CD4-positive, alpha-beta T cell (primary cell): ENCODE measurements at regions of chr4 and their contacts with region 1.

Region 1: DNA sequence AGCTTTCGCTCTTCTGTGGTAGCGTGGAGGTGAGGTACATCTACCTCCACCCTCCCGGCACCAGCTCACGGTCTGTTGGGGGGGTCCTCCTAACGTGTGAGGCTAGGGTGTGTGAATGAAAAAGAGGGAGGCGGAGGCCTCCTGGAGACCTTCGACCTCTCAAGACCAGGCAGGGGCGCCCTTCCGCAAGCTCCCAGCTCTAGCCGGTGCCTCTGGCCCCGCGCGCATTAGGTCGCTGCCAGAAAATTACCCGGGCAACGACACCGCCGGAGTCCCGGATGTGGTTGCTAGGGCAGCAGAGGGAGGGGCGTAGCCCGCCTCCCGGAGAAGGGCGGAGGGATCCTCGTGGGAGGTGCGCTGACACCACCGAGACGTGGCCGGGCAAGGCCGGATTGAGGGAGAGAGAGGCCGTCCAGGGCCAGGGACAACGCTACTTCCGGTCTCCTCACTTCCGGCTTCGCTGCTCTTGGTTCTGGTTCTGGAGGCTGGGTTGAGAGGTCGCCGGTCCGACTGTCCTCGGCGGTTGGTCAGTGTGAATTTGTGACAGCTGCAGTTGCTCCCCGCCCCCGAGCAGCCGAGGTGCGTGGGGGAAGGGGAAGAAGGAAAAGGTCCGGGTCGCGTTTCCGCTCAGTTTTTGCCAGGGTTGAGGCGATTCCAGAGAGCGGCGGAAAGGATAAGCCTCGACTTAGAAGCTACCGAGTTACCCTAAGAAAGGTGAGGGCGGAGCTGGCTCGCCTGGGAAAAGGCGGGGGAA is at the starts of genes ARFIP1 and TIGD4:
- DNase-seq: peak; percentile 84 to 96 (median 92)
- ATAC-seq: peak; percentile 84
- H3K4me3 ChIP-seq: peak within 1 kb of the TSS; percentile 72
- H3K4me3 Mint-ChIP-seq: peak within 1 kb of the TSS; percentile 90
- H3K27ac ChIP-seq: peak within 1 kb of the TSS; percentile 75 to 79
- H3K27ac Mint-ChIP-seq: peak within 1 kb of the TSS; percentile 95
- H3K4me1 ChIP-seq: peaks cover 21% of the 10 kb centered on the region
- H3K4me1 Mint-ChIP-seq: peaks cover 50% of the 10 kb centered on the region
- H3K27me3 ChIP-seq: no peaks in the 10 kb centered on the region
- H3K27me3 Mint-ChIP-seq: peaks cover 11% of the 10 kb centered on the region
- CTCF ChIP-seq: no peak
- total RNA-seq, gene ARFIP1: 2.6 to 3.0 TPM
- total RNA-seq, gene TIGD4: 0.22 TPM in 1 of 2 experiments, not detected in the other

Region 2: GRCh38 chr4:151015459-151016347 is 1764.0 kb before region 1 on chr4:
- CTCF ChIA-PET with region 1: no interaction called
- POLR2A ChIA-PET with region 1: interaction called, 6 read pairs
- intact Hi-C with region 1: loop called in 1 of 2 experiments (anchors 10 kb)
- DNase-seq: peak; percentile 65 to 95 (median 78)
- ATAC-seq: peak; percentile 72
- H3K4me3 ChIP-seq: peak overlapping the region; percentile 83
- H3K4me3 Mint-ChIP-seq: peak overlapping the region; percentile 100
- H3K27ac ChIP-seq: peak overlapping the region; percentile 91 to 97
- H3K27ac Mint-ChIP-seq: peak overlapping the region; percentile 98
- H3K4me1 ChIP-seq: peaks cover 28% of the 10 kb centered on the region
- H3K4me1 Mint-ChIP-seq: peaks cover 40% of the 10 kb centered on the region
- H3K27me3 ChIP-seq: no peaks in the 10 kb centered on the region
- H3K27me3 Mint-ChIP-seq: no peaks in the 10 kb centered on the region
- CTCF ChIP-seq: no peak

Region 3: DNA sequence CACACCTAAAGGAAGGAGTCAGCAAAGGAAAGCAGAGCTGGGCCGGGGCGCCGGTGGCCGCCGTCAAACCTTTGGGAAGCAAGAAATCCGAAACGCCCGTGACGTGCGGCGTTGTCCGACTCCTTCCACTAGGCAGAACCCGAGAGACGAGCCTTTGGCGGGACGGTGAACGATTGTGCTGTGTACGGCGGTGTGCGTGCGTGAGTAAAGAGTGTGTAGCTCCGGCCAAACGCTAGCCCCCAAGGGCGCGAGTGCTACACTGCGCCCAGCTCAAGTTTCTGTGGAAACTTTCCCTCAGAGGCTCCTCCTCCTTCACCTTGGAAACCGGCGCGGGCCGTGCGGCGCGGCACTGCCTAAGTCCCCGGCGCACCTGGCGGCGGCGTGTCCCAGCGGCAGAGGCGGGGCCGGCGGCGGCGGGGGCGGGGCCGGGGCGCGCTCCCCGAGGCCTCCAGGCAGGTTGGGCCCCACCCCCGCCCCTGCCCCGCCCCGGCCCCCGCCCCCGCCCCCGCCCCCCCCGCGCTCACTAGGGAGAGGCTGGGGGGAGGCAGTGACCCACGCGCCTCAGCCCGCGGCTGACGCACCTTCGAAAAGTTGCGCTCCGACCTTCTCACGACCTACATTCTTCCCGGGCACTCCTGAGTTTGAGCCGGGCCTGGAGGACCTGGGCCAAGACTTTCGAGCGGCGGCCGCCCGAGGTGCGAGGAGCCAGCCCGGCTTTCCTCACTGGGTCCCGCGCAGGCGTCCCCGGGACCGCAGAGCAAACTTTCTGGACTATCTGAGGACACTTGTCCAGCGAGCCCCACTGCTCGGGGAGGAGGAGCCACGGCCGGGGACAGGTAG is 1370.8 kb before region 1 on chr4 and contains the start of gene FHIP1A:
- CTCF ChIA-PET with region 1: interaction called, 3 read pairs
- POLR2A ChIA-PET with region 1: no interaction called
- intact Hi-C with region 1: loop called in 1 of 2 experiments (anchors 5 kb)
- DNase-seq: peak; percentile 73 to 93 (median 85)
- ATAC-seq: peak; percentile 93
- H3K4me3 ChIP-seq: peak within 1 kb of the TSS; percentile 68
- H3K4me3 Mint-ChIP-seq: peak within 1 kb of the TSS; percentile 96
- H3K27ac ChIP-seq: no peak within 1 kb of the TSS
- H3K27ac Mint-ChIP-seq: peak within 1 kb of the TSS; percentile 83
- H3K4me1 ChIP-seq: peaks cover 27% of the 10 kb centered on the region
- H3K4me1 Mint-ChIP-seq: peaks cover 27% of the 10 kb centered on the region
- H3K27me3 ChIP-seq: peaks cover 0 to 4% of the 10 kb centered on the region in 2 experiments
- H3K27me3 Mint-ChIP-seq: peaks cover 4% of the 10 kb centered on the region
- CTCF ChIP-seq: no peak
- total RNA-seq, gene FHIP1A: 2.4 to 3.2 TPM

Region 4: GRCh38 chr4:152640058-152640833 is 139.4 kb before region 1 on chr4:
- CTCF ChIA-PET with region 1: no interaction called
- POLR2A ChIA-PET with region 1: no interaction called
- intact Hi-C with region 1: no loop called
- DNase-seq: peak in 3 of 14 experiments; percentile 39 to 47 (median 41)
- ATAC-seq: peak; percentile 56
- H3K4me3 ChIP-seq: no peak overlapping the region
- H3K4me3 Mint-ChIP-seq: no peak overlapping the region
- H3K27ac ChIP-seq: no peak overlapping the region
- H3K27ac Mint-ChIP-seq: no peak overlapping the region
- H3K4me1 ChIP-seq: peaks cover 16% of the 10 kb centered on the region
- H3K4me1 Mint-ChIP-seq: peaks cover 22% of the 10 kb centered on the region
- H3K27me3 ChIP-seq: no peaks in the 10 kb centered on the region
- H3K27me3 Mint-ChIP-seq: no peaks in the 10 kb centered on the region
- CTCF ChIP-seq: peak; percentile 87

Region 5: GRCh38 chr4:152679414-152680281 is 100.0 kb before region 1 on chr4 and contains the start of gene TMEM154:
- CTCF ChIA-PET with region 1: interaction called, 3 read pairs
- POLR2A ChIA-PET with region 1: interaction called, 16 read pairs
- intact Hi-C with region 1: loop called in 1 of 2 experiments (anchors 5 kb)
- DNase-seq: peak; percentile 48 to 90 (median 67)
- ATAC-seq: peak; percentile 98
- H3K4me3 ChIP-seq: peak within 1 kb of the TSS; percentile 88
- H3K4me3 Mint-ChIP-seq: peak within 1 kb of the TSS; percentile 97
- H3K27ac ChIP-seq: peak within 1 kb of the TSS; percentile 66 to 73
- H3K27ac Mint-ChIP-seq: peak within 1 kb of the TSS; percentile 98
- H3K4me1 ChIP-seq: peaks cover 31% of the 10 kb centered on the region
- H3K4me1 Mint-ChIP-seq: peaks cover 52% of the 10 kb centered on the region
- H3K27me3 ChIP-seq: no peaks in the 10 kb centered on the region
- H3K27me3 Mint-ChIP-seq: no peaks in the 10 kb centered on the region
- CTCF ChIP-seq: no peak
- total RNA-seq, gene TMEM154: 13.6 to 16.7 TPM

Region 6: GRCh38 chr4:153249199-153250041 is 469.7 kb after region 1 on chr4:
- CTCF ChIA-PET with region 1: no interaction called
- POLR2A ChIA-PET with region 1: no interaction called
- intact Hi-C with region 1: loop called in 1 of 2 experiments (anchors 10 kb)
- DNase-seq: peak; percentile 67 to 96 (median 82)
- ATAC-seq: peak; percentile 97
- H3K4me3 ChIP-seq: peak overlapping the region; percentile 72
- H3K4me3 Mint-ChIP-seq: peak overlapping the region; percentile 93
- H3K27ac ChIP-seq: peak overlapping the region; percentile 81 to 85
- H3K27ac Mint-ChIP-seq: peak overlapping the region; percentile 85
- H3K4me1 ChIP-seq: peaks cover 20% of the 10 kb centered on the region
- H3K4me1 Mint-ChIP-seq: peaks cover 34% of the 10 kb centered on the region
- H3K27me3 ChIP-seq: no peaks in the 10 kb centered on the region
- H3K27me3 Mint-ChIP-seq: no peaks in the 10 kb centered on the region
- CTCF ChIP-seq: no peak